ENCODE measurements at regions of chr10 and their contacts with region 1.

Region 1: DNA sequence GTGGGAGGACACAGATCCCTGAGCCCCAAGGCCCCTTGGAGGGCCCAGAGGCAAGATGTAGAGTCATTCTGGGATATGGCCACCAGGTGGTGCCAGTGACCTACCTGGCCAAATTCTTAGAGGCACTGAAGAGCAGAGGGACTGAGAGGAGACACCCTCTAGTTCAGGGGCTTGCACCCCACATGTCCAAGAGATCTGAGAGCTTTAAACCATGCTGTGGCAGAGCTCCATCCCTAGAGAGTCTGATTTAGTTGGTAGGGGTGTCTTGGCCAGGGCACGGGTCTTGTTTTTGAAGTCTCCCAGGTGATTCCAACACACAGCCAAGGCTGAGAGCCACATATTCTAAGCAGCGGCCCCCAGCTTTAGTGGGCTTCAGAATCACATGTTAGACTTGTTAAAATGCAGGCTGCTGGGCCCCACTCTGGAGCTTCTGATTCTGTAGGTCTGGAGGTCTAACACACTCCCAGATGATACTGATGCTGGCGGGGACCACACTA is 52.5 kb downstream of the PRF1 start:
- DNase-seq: peak; percentile 49 to 76 (median 60)
- ATAC-seq: peak; percentile 63 to 77 (median 76)
- H3K4me3 ChIP-seq: no peak overlapping the region
- H3K27ac ChIP-seq: no peak overlapping the region
- H3K4me1 ChIP-seq: peaks cover 0 to 20% (median 2%) of the 10 kb centered on the region in 12 donors
- H3K27me3 ChIP-seq: no peaks in the 10 kb centered on the region
- CTCF ChIP-seq: peak; percentile 82 to 97 (median 90)
- POLR2A ChIP-seq: no peak

Region 2: GRCh38 chr10:70227548-70228320 is 322.3 kb before region 1 on chr10:
- intact Hi-C with region 1: loop called in 1 of 10 experiments (anchors 10 kb)
- DNase-seq: no peak
- ATAC-seq: peak in 3 of 4 donors; percentile 42 to 60 (median 48)
- H3K4me3 ChIP-seq: no peak overlapping the region
- H3K27ac ChIP-seq: peak overlapping the region in 6 of 12 donors; percentile 1 to 34 (median 28)
- H3K4me1 ChIP-seq: peaks cover 0 to 55% (median 23%) of the 10 kb centered on the region in 12 donors
- H3K27me3 ChIP-seq: no peaks in the 10 kb centered on the region
- CTCF ChIP-seq: no peak
- POLR2A ChIP-seq: no peak

Region 3: DNA sequence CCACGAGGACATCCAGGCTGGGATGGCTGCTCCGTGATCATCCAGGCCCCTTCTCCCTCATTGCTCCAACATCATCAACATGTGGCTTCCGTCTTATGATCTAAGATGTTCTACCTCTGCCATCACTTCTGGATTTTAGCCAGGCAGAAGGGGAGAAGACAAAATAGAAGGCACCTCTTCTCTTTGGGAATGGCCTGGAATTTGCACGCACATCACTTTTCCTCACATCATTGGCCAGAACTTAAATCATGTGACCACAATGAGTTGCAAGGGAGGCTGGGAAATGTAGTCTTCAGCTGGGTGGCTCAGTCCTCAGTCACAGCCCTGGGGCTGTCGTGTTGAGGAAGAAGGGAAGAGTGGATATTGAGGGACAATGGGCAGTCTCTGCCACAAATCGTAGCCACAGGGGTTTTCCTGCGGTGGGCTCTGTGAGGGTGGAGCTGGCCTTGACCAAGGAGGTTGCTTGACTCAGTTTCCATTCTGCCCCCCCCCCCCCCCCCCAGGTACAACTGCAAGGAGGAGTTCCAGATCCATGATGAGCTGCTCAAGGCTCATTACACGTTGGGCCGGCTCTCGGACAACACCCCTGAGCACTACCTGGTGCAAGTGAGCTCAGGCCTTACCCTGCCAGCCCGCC is 21.2 kb before region 1 on chr10:
- intact Hi-C with region 1: no loop called
- DNase-seq: no peak
- ATAC-seq: peak in 3 of 4 donors; percentile 28 to 71 (median 64)
- H3K4me3 ChIP-seq: no peak overlapping the region
- H3K27ac ChIP-seq: no peak overlapping the region
- H3K4me1 ChIP-seq: peaks cover 0 to 2% (median 0%) of the 10 kb centered on the region in 12 donors
- H3K27me3 ChIP-seq: no peaks in the 10 kb centered on the region
- CTCF ChIP-seq: no peak
- POLR2A ChIP-seq: no peak

Region 4: GRCh38 chr10:70672165-70673042 is 122.4 kb after region 1 on chr10 and contains the start of gene ADAMTS14:
- intact Hi-C with region 1: loop called in 6 of 10 experiments (anchors 5 to 10 kb)
- DNase-seq: peak in 4 of 5 donors; percentile 45 to 56 (median 52)
- ATAC-seq: peak in 3 of 4 donors; percentile 26 to 68 (median 65)
- H3K4me3 ChIP-seq: peak within 1 kb of the TSS; percentile 10 to 57 (median 49)
- H3K27ac ChIP-seq: peak within 1 kb of the TSS in 4 of 12 donors; percentile 34 to 71 (median 38)
- H3K4me1 ChIP-seq: peaks cover 0 to 33% (median 17%) of the 10 kb centered on the region in 12 donors
- H3K27me3 ChIP-seq: peaks cover 0 to 23% (median 0%) of the 10 kb centered on the region in 9 donors
- CTCF ChIP-seq: no peak
- POLR2A ChIP-seq: no peak
- total RNA-seq, gene ADAMTS14: 0.16 to 3.8 (median 0.47) TPM in 8 of 9 donors, not detected in the other

Region 5: GRCh38 chr10:70758757-70759514 is 208.9 kb after region 1 on chr10:
- intact Hi-C with region 1: loop called (anchors 1 to 2 kb)
- DNase-seq: peak; percentile 59 to 77 (median 73)
- ATAC-seq: peak; percentile 27 to 80 (median 53)
- H3K4me3 ChIP-seq: no peak overlapping the region
- H3K27ac ChIP-seq: no peak overlapping the region
- H3K4me1 ChIP-seq: peaks cover 0 to 19% (median 2%) of the 10 kb centered on the region in 12 donors
- H3K27me3 ChIP-seq: no peaks in the 10 kb centered on the region
- CTCF ChIP-seq: peak; percentile 65 to 87 (median 76)
- POLR2A ChIP-seq: no peak

Region 6: DNA sequence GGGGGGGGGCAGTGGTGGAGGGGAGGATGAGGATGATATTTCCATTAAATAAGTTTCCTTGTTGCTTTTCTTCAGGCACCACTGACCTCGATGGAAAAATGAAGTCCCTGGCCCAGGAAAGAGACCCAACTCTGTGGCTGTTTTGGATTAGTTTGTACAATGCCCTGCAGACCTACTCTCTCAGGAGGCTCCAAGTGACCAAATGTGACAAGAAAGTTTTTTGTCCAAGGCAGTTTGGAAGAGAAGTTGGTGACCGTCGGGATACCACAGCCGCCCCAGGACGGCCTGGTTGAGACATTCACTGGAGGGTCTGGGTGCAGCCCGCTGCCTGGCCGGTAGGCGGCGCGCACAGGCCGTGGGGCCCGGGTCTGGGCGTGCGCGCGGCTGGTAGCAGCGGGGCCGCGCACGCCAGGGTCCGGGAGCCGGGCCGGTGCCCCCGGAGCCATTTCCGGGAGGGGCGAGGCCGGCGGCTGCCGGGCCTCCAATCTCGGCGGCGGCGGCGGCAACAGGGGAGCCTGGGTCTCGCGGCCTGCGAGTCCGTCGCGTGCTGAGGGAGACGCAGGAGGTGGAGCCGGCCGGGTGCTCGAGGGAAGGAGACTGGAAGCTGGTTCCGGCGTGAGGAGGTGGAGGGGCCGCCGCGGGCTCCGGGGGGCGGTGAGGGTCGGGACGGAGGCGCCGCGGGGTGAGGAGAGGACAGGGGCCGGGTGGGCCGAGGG is 265.7 kb after region 1 on chr10 and contains the start of gene SGPL1:
- intact Hi-C with region 1: loop called in 1 of 10 experiments (anchors 5 kb)
- DNase-seq: peak; percentile 81 to 93 (median 88)
- ATAC-seq: peak; percentile 87 to 98 (median 97)
- H3K4me3 ChIP-seq: peak within 1 kb of the TSS; percentile 58 to 96 (median 80)
- H3K27ac ChIP-seq: peak within 1 kb of the TSS; percentile 67 to 95 (median 86)
- H3K4me1 ChIP-seq: peaks cover 0 to 25% (median 11%) of the 10 kb centered on the region in 12 donors
- H3K27me3 ChIP-seq: no peaks in the 10 kb centered on the region
- CTCF ChIP-seq: peak; percentile 81 to 99 (median 98)
- POLR2A ChIP-seq: peak in 1 of 2 donors; percentile 70
- total RNA-seq, gene SGPL1: 9.0 to 32.3 (median 12.2) TPM

Region 7: GRCh38 chr10:70880077-70880534 is 330.1 kb after region 1 on chr10:
- intact Hi-C with region 1: loop called (anchors 1 to 5 kb)
- DNase-seq: peak; percentile 70 to 77 (median 75)
- ATAC-seq: peak; percentile 34 to 80 (median 76)
- H3K4me3 ChIP-seq: no peak overlapping the region
- H3K27ac ChIP-seq: no peak overlapping the region
- H3K4me1 ChIP-seq: peaks cover 0 to 16% (median 0%) of the 10 kb centered on the region in 12 donors
- H3K27me3 ChIP-seq: no peaks in the 10 kb centered on the region
- CTCF ChIP-seq: peak; percentile 82 to 95 (median 92)
- POLR2A ChIP-seq: no peak